ENCODE measurements at regions of chr7 and their contacts with region 1.

Region 1: DNA sequence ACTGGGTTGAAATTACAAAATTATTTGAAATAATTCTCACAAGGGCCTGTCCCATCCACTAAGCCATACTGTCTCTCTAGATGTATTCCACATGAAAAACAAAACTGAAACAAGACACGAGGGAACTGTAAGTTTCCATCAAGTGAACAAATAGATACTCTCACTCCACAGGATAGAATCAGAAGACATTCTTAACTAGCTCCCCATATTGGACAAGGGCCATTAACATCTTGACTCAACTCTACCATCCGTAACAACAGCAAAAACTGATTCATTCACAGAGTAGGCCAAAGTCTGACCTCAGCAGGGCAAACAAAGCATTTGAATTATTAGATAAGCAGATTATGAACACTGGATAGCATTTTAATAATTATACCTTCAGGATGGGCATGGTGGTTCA is 29.1 kb downstream of the UBE2H start:
- DNase-seq: no peak
- ATAC-seq: peak; percentile 31
- H3K4me3 Mint-ChIP-seq: no peak overlapping the region
- H3K27ac Mint-ChIP-seq: peak overlapping the region; percentile 46
- H3K4me1 Mint-ChIP-seq: peaks cover 45% of the 10 kb centered on the region
- H3K27me3 Mint-ChIP-seq: no peaks in the 10 kb centered on the region
- CTCF ChIP-seq: no peak

Region 2: DNA sequence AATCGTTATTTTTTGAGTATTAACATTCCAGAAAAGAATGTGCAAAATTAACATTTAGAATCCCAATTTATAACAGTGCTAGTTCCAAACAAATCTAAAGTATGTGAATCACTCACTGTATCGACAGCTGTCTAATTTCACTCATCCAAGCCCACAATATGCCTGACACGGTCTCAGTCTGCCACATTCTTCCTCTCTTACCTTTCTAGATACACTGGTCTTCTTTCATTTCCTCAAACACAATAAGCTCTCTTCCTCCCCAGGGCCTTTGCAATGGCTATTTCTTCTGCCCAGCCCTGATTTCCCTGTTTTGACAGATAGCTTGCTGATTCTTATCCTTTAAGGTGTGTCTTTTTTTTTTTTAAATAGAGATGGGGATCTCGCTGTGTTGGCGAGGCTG is 19.8 kb before region 1 on chr7:
- CTCF ChIA-PET with region 1: no interaction called
- POLR2A ChIA-PET with region 1: interaction called, 3 read pairs
- intact Hi-C with region 1: loop called (anchors 2 kb)
- DNase-seq: no peak
- ATAC-seq: peak; percentile 97
- H3K4me3 Mint-ChIP-seq: peak overlapping the region; percentile 21
- H3K27ac Mint-ChIP-seq: peak overlapping the region; percentile 57
- H3K4me1 Mint-ChIP-seq: peaks cover 86% of the 10 kb centered on the region
- H3K27me3 Mint-ChIP-seq: no peaks in the 10 kb centered on the region
- CTCF ChIP-seq: no peak

Measured in activated B cell treated with CpG ODN at 0.5 μM for 24 hours (primary cell).